ENCODE measurements at regions of chr14 and their contacts with region 1.

Region 1: GRCh38 chr14:89915114-89915878 is 39.2 kb downstream of the EFCAB11 start:
- DNase-seq: peak; percentile 59
- H3K4me3 ChIP-seq: no peak overlapping the region
- H3K27ac ChIP-seq: no peak overlapping the region
- H3K4me1 ChIP-seq: peaks cover 8% of the 10 kb centered on the region
- H3K27me3 ChIP-seq: no peaks in the 10 kb centered on the region
- CTCF ChIP-seq: peak; percentile 80 to 91 (median 88)
- POLR2A ChIP-seq: no peak

Region 2: GRCh38 chr14:89027097-89027740 is 888.1 kb before region 1 on chr14:
- intact Hi-C with region 1: loop called (anchors 5 kb)
- DNase-seq: peak; percentile 22
- H3K4me3 ChIP-seq: peak overlapping the region; percentile 37 to 39
- H3K27ac ChIP-seq: no peak overlapping the region
- H3K4me1 ChIP-seq: no peaks in the 10 kb centered on the region
- H3K27me3 ChIP-seq: peaks cover 2% of the 10 kb centered on the region
- CTCF ChIP-seq: peak; percentile 82 to 93 (median 88)
- POLR2A ChIP-seq: peak; percentile 27

Region 3: DNA sequence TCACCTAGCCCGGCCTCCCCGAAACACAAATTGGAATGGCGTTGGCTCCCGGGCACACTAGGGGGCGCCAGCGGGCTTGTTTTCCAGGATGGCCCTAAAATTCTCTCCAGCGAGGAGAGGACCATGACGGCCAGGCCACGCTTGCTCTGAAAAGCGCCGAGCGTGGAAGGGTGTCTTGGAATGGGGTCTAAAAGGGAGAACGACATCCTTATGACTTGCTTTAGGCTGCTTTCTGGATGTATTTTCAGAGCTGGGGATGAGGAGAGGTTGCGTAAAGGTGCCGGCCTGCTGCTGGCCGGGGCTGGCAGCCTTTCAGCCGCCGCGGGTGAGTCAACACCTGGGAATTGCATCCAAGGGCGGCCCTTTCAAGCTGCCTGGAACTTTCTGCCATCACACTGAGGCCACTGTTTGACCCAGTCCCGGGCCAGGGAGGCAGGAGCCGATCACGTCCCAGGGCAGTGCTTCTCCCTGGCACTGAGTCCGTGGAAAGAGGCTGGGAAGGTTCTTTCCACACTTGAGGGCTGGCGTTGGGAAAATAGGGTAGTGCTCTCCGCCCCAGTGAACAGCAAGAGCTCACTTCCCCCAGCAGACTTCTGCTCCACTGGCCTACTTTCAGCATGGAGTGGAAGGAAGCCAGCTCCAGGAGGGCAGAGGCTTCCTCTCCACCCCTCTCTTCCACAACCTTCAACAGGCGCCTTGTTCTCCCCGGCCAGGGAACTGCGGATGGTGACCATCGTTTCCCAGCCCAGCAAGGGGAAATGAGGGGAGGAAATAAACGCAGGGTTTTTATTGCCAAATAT is 874.6 kb before region 1 on chr14:
- intact Hi-C with region 1: loop called (anchors 1 kb)
- DNase-seq: peak; percentile 86
- H3K4me3 ChIP-seq: peak overlapping the region; percentile 12 to 23
- H3K27ac ChIP-seq: peak overlapping the region; percentile 77 to 80
- H3K4me1 ChIP-seq: peaks cover 2% of the 10 kb centered on the region
- H3K27me3 ChIP-seq: no peaks in the 10 kb centered on the region
- CTCF ChIP-seq: peak; percentile 89 to 95 (median 92)
- POLR2A ChIP-seq: no peak

Region 4: DNA sequence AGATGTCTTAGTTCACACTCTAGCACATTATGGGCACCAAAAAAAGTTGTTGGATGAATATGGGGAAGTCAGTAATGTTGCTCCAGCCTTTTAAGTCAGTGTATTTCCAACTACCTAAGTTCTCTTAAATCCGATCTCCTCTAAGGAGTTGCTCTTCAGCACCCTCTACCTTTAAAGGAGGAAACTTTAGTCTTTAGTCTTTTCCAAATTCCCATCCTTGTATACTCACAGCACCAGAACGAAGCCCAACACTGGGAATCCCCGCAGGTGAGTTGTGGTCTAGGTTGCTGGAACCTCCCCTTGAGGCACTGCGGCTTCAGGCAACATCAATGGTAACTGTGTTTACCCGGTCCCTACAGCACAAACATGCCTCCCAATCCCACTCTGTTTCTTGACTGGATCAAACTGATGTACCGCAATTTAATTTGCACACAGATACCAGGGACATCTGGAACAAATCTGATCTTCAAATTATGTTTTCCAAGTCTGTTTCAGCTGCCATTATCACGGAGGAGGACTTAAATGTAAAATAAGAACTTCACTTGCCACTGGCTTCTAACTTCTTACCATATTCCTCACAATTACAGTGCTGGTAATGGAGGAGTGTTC is 677.3 kb before region 1 on chr14:
- intact Hi-C with region 1: loop called (anchors 10 kb)
- DNase-seq: no peak
- H3K4me3 ChIP-seq: no peak overlapping the region
- H3K27ac ChIP-seq: no peak overlapping the region
- H3K4me1 ChIP-seq: no peaks in the 10 kb centered on the region
- H3K27me3 ChIP-seq: no peaks in the 10 kb centered on the region
- CTCF ChIP-seq: peak in 3 of 4 experiments; percentile 28 to 51 (median 43)
- POLR2A ChIP-seq: no peak

Region 5: DNA sequence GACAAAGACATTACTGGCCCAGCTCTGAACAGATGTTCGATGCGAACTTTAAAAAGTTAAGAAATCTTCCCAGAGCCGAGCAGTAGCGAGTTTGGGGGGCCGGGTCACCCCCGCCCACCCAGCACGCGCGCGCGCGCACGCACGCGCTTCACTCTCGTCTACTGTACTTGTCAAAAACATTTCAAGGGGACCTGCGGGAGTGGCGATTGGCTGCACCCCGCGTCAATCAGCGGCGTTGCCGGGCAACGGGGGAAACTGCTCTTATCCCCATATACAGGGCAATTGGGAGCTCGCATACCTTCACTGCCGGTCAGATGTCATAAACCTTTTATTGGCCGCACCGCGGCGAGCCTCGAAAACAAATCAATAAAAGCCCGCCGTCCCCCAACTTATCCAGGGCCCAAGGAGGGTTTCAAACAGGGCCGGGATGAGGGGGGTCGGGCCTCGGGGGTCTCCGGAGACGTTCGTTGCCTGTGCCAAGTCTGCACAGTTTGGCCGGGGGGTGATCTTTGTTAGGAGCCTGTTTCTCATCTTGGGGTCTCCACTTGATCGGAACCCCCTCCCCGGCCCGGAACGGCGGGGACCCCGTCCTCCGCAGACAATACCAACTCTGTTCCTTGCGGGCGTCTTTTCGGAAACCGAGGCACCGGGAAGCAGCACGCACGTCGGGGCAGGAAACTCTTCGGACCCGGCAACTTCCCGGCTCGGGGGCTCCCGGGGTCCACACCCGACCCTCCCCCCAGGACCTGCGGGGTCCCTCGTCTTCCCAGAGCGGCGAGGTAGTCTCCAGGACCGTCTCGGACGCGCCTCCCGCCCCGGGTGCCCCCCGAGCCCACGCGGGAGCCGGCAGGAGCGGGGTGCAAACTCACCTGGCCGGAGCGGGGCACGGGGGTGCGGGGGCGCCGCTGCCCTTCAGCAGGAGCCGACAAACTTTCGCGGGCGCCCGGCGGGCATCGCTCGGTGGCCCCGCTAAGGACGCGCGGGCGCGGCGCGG is 499.0 kb before region 1 on chr14:
- intact Hi-C with region 1: loop called (anchors 5 kb)
- DNase-seq: peak; percentile 99
- H3K4me3 ChIP-seq: peak overlapping the region; percentile 91 to 92
- H3K27ac ChIP-seq: peak overlapping the region; percentile 94 to 95
- H3K4me1 ChIP-seq: peaks cover 8% of the 10 kb centered on the region
- H3K27me3 ChIP-seq: no peaks in the 10 kb centered on the region
- CTCF ChIP-seq: no peak
- POLR2A ChIP-seq: peak; percentile 66

Region 6: DNA sequence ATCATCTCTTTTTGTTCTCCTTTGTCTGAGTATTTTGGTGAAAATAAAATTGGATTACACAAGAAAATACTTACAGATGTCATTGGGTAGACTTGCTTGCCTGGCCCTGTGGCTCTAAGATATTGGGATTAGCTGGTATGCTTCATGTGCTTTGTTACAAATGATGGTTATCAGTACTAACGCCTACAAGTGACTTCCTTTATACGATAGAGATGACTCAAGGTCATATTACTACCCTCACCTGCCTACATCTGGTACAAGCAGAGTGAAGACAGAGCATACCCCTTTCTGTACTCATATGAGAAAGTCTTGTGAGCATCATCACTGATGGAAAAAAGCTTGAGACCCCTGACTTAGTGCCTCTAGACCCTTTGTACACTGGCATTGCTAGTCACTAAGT is 88.6 kb after region 1 on chr14:
- intact Hi-C with region 1: no loop called
- DNase-seq: no peak
- H3K4me3 ChIP-seq: no peak overlapping the region
- H3K27ac ChIP-seq: no peak overlapping the region
- H3K4me1 ChIP-seq: no peaks in the 10 kb centered on the region
- H3K27me3 ChIP-seq: no peaks in the 10 kb centered on the region
- CTCF ChIP-seq: no peak
- POLR2A ChIP-seq: no peak